Cardiac septum (tissue), 1 donor: ENCODE measurements at regions of chr1 and their contacts with region 1.

Region 1: DNA sequence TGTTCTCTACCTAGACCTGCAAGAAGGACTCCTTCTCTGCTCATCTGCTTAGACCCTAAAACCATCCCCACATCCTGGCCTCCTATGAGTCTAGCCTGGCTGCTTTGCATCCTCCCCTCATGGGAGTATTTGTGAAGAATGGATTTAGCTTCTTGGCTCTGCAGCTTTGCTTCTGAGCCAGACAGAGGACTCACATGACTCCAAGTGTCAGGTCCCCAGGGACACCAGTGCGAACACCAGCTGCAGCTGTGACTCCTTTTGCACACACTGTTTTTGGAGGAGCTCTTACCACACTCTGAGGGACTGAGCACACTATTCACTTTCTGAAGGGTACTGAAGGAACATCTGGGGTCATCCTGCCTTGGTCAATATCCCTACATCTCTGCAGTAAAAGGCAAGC is 131.8 kb upstream of the SGIP1 start:
- DNase-seq: peak; percentile 85

Region 2: DNA sequence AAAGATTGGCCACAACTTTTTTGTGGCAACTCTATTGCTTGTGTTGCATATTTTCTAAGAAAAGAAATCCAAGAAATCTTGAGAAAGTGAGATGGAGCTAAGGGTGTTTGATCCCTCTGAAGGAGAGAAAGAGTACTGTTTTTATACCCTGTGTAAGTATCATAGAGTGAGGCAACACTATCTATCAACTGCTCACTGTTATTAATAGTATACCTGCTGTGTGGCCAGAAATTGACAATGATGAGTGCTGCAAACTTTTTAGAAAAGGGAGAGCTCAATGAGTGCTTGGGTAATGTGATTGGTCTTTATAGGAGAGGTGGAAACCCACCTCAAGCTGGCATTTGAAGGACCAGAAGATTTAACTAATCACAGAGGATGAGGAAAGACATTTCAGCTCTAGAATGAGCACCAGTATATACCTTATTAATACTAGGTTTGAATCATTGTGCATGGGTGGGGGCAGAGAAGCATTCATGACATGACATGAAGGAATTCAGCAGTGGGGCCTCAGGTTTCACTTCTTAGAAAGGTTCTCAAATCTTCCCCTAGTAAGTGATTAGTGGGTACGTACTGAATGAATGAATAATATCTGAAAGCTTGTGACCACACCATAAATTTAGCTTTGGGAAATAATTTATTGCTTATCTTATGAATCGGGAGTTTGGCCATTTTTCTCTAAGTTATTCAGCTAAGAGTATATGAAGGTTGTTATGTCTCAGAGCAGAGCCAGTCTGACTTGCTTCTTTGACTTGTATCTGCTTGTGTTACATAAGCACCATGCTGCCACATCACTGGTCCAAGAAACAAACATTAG is 37.4 kb before region 1 on chr1:
- intact Hi-C with region 1: loop called (anchors 5 kb)
- DNase-seq: no peak

Region 3: DNA sequence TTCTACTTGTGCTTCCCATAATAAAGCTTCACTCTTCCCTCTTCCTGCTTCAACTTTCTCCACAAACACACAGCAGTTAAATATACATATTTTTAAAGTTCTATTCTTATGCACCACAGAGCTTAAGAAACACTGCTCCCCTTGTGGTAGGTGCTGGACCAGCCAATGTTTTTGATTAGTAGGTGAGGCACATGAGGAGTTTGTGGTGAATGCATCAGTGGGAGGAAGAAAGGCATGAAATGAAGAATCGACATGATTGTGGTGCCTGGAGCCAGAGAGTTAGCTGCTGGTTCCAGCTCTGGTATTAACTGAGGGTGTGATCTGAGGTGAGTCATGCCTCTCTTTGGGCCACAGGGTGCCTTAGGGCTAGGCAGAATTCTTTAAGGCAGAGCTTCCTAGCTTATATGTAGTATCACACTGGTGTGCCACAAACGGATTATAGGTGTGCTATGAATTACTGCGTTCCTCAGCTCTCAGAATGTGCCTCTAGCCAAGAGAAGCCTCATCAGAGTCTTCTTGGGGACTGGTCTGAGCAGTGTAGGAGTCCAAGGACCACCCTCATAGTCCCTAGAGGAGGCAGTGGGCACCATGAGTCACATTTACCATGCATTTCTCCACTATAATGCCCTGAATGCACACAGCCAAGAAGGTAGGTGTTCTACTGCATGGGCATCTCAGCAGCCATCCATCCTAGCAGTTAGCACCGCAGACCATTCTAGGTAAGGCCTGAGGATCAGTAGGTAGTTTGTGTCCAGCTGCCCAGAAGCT is 34.4 kb after region 1 on chr1:
- intact Hi-C with region 1: loop called (anchors 5 kb)
- DNase-seq: no peak